ENCODE measurements at regions of chr2 and their contacts with region 1.

Region 1: GRCh38 chr2:107281637-107282036 is 395.7 kb upstream of the ST6GAL2 start:
- DNase-seq: no peak
- H3K4me3 ChIP-seq: no peak overlapping the region
- H3K27ac ChIP-seq: no peak overlapping the region
- H3K4me1 ChIP-seq: no peaks in the 10 kb centered on the region
- H3K27me3 ChIP-seq: no peaks in the 10 kb centered on the region
- CTCF ChIP-seq: no peak

Region 2: GRCh38 chr2:107132070-107132469 is 149.6 kb before region 1 on chr2:
- intact Hi-C with region 1: loop called (anchors 10 kb)
- DNase-seq: no peak
- H3K4me3 ChIP-seq: peak overlapping the region; percentile 45 to 59
- H3K27ac ChIP-seq: no peak overlapping the region
- H3K4me1 ChIP-seq: peaks cover 0 to 5% of the 10 kb centered on the region in 2 donors
- H3K27me3 ChIP-seq: no peaks in the 10 kb centered on the region
- CTCF ChIP-seq: no peak

Region 3: DNA sequence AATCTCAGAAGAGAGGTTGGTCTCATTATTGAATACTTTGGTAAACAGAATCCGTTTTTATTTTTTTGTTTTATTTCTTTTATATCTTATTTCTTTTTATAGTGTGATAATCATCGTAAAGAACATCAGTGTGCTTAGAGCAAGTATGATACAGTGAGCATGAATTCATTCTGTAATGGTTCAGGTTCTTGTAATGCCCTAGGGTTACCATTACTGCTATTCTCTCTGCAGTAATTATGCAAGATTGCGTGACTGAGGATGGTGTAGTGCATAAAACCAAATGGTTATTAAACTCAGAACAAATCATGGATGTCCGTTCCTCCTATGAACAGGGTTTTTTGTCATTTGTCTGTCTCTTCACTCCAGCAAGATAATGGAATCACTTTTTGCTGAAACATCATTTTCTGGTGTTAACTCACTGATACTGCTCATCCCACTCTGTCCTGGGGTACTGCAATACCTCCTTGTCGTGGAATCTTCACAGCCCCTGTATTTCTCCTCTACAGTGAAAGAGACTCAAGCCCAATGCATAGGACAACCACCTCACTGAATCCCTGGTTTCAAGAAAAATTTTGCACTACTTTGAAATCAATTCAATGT is 120.9 kb before region 1 on chr2:
- intact Hi-C with region 1: no loop called
- DNase-seq: no peak
- H3K4me3 ChIP-seq: no peak overlapping the region
- H3K27ac ChIP-seq: no peak overlapping the region
- H3K4me1 ChIP-seq: no peaks in the 10 kb centered on the region
- H3K27me3 ChIP-seq: no peaks in the 10 kb centered on the region
- CTCF ChIP-seq: no peak

Region 4: DNA sequence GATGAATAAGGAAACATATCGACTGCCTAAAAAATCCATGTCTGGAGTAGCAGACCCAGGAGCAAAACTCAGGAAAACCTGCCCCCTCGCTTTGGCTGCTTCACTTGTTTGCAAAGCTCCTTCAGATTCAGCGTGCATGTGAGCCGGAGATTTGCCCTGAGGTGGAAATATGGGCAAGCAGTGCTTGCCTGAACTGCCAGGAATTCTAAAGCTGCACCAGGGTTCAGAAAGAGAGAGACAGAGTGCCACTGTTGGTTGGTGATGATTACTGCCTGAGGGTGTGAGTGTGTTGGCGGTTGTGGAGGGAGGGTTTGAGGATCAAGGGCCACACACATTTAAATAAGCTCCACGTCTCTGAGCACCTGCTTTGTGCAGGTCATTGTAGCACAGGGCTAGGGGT is 405.4 kb after region 1 on chr2:
- intact Hi-C with region 1: no loop called
- DNase-seq: no peak
- H3K4me3 ChIP-seq: no peak overlapping the region
- H3K27ac ChIP-seq: no peak overlapping the region
- H3K4me1 ChIP-seq: no peaks in the 10 kb centered on the region
- H3K27me3 ChIP-seq: no peaks in the 10 kb centered on the region
- CTCF ChIP-seq: no peak